ENCODE measurements at regions of chr22 and their contacts with region 1.

Region 1: DNA sequence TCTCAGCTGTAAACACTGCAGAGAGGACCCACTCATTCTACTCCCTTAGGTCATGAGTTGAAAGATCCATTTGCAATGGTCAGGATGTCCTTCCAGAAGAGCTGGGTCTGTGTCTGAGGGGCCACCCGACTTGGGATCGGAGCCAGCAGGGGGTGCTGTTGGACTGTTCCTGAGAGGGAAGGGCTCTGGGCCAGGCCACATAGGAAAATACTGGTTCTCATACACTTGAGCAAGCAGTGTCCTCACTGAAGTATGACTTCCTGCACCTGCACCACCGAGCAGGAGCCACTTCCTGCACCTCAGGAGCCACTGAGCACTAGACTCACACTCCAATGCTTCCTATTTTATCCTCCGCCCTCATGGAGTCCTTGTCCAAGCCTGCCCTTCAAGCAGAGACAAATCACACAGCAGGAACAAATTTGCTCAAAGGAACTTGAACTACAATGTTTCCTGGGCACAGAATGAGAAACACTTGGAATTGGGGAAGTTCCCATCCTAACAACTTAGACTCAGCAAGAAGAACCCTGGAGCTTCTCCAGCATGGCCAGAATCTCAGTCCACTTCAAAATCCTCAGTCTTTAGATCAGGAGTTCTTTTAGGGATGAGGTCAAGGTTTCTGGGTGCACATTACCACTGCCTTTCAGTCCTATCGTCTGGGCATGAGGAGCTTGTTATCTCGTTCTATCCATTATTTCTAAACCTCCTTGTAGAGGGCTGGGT is 36.6 kb upstream of the VPREB1 start:
- DNase-seq: peak; percentile 90
- ATAC-seq: peak; percentile 85
- H3K4me3 ChIP-seq: peak overlapping the region in 1 of 5 experiments; percentile 12
- H3K4me3 Mint-ChIP-seq: peak overlapping the region; percentile 67
- H3K27ac ChIP-seq: peak overlapping the region; percentile 45 to 51
- H3K27ac Mint-ChIP-seq: peak overlapping the region; percentile 93
- H3K4me1 ChIP-seq: peaks cover 53 to 57% of the 10 kb centered on the region in 2 donors
- H3K4me1 Mint-ChIP-seq: peaks cover 54% of the 10 kb centered on the region
- H3K27me3 ChIP-seq: no peaks in the 10 kb centered on the region
- H3K27me3 Mint-ChIP-seq: no peaks in the 10 kb centered on the region
- CTCF ChIP-seq: peak; percentile 89

Region 2: DNA sequence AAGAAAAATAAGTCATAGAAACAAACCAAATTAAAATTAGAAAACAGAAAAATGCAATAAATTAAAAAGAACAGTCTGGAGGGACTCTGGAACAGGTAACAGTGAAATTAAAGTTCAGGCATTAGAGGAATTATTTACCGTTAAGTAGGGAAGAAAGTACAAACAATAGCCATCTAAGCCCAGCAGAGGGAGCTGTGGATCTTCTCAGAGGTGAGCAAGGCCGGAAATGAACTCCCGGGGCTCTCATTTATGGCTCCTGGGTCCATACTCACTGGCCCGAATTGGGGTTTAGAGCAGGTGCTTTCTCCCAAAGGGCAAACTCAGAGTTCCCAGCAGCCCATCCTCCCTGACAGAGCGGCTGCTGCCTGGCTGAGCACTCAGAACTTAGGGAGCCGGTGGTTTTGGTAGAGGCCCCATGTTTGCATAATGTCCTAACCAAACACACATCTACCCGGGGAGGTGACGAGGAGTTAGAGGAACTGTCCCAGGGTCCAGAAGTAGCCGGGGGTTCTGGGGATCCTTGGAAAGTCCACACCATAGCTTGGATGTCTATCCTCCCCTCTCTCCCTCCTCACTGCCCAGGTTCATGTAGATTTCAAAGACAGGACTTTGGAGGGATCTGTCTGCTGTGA is 51.2 kb before region 1 on chr22:
- CTCF ChIA-PET with region 1: interaction called, 80 read pairs
- POLR2A ChIA-PET with region 1: no interaction called
- intact Hi-C with region 1: loop called (anchors 1 kb)
- DNase-seq: peak; percentile 91
- ATAC-seq: peak; percentile 79
- H3K4me3 ChIP-seq: peak overlapping the region in 2 of 5 experiments; percentile 11 to 17
- H3K4me3 Mint-ChIP-seq: peak overlapping the region; percentile 86
- H3K27ac ChIP-seq: peak overlapping the region; percentile 92
- H3K27ac Mint-ChIP-seq: peak overlapping the region; percentile 99
- H3K4me1 ChIP-seq: peaks cover 42 to 53% of the 10 kb centered on the region in 2 donors
- H3K4me1 Mint-ChIP-seq: peaks cover 51% of the 10 kb centered on the region
- H3K27me3 ChIP-seq: no peaks in the 10 kb centered on the region
- H3K27me3 Mint-ChIP-seq: no peaks in the 10 kb centered on the region
- CTCF ChIP-seq: peak; percentile 92

Region 3: GRCh38 chr22:22168190-22168940 is 39.6 kb before region 1 on chr22:
- CTCF ChIA-PET with region 1: interaction called, 80 read pairs
- POLR2A ChIA-PET with region 1: interaction called, 4 read pairs
- intact Hi-C with region 1: no loop called
- DNase-seq: peak; percentile 74
- ATAC-seq: peak; percentile 55
- H3K4me3 ChIP-seq: peak overlapping the region; percentile 20 to 59 (median 40)
- H3K4me3 Mint-ChIP-seq: peak overlapping the region; percentile 92
- H3K27ac ChIP-seq: peak overlapping the region; percentile 96 to 98
- H3K27ac Mint-ChIP-seq: peak overlapping the region; percentile 100
- H3K4me1 ChIP-seq: peaks cover 80 to 88% of the 10 kb centered on the region in 2 donors
- H3K4me1 Mint-ChIP-seq: peaks cover 81% of the 10 kb centered on the region
- H3K27me3 ChIP-seq: no peaks in the 10 kb centered on the region
- H3K27me3 Mint-ChIP-seq: no peaks in the 10 kb centered on the region
- CTCF ChIP-seq: no peak

Region 4: GRCh38 chr22:22235558-22235957 is 27.6 kb after region 1 on chr22:
- CTCF ChIA-PET with region 1: interaction called, 65 read pairs
- POLR2A ChIA-PET with region 1: no interaction called
- intact Hi-C with region 1: loop called (anchors 1 kb)
- DNase-seq: peak; percentile 67
- ATAC-seq: peak; percentile 24
- H3K4me3 ChIP-seq: no peak overlapping the region
- H3K4me3 Mint-ChIP-seq: peak overlapping the region; percentile 37
- H3K27ac ChIP-seq: no peak overlapping the region
- H3K27ac Mint-ChIP-seq: peak overlapping the region; percentile 53
- H3K4me1 ChIP-seq: peaks cover 16 to 27% of the 10 kb centered on the region in 2 donors
- H3K4me1 Mint-ChIP-seq: peaks cover 24% of the 10 kb centered on the region
- H3K27me3 ChIP-seq: no peaks in the 10 kb centered on the region
- H3K27me3 Mint-ChIP-seq: no peaks in the 10 kb centered on the region
- CTCF ChIP-seq: peak; percentile 48

Region 5: DNA sequence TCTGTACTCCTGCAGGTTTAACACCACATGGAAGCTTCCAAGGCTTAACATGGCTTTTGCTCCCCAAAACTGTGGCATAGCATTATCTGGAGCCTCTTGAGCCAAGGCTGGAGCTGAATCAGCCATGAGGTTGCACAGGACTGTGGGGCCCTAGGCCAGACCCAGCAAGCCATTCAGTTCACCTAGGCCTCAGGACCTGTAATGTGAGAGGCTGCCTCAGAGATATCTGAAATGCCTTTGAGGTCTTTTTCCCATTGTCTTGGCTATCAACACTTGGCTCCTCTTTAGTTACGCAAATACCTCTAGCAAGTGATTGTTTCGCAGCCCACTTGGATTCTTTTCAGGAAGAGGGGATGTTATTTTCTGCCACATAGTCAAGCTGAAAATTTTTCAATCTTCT is 108.6 kb after region 1 on chr22:
- CTCF ChIA-PET with region 1: interaction called, 10 read pairs
- POLR2A ChIA-PET with region 1: no interaction called
- intact Hi-C with region 1: no loop called
- DNase-seq: no peak
- ATAC-seq: no peak
- H3K4me3 ChIP-seq: no peak overlapping the region
- H3K4me3 Mint-ChIP-seq: no peak overlapping the region
- H3K27ac ChIP-seq: no peak overlapping the region
- H3K27ac Mint-ChIP-seq: no peak overlapping the region
- H3K4me1 ChIP-seq: peaks cover 15 to 18% of the 10 kb centered on the region in 2 donors
- H3K4me1 Mint-ChIP-seq: peaks cover 22% of the 10 kb centered on the region
- H3K27me3 ChIP-seq: no peaks in the 10 kb centered on the region
- H3K27me3 Mint-ChIP-seq: no peaks in the 10 kb centered on the region
- CTCF ChIP-seq: no peak

Region 6: GRCh38 chr22:22342697-22343580 is 134.9 kb after region 1 on chr22:
- CTCF ChIA-PET with region 1: interaction called, 7 read pairs
- POLR2A ChIA-PET with region 1: no interaction called
- intact Hi-C with region 1: loop called (anchors 2 kb)
- DNase-seq: peak; percentile 75
- ATAC-seq: peak; percentile 53
- H3K4me3 ChIP-seq: no peak overlapping the region
- H3K4me3 Mint-ChIP-seq: peak overlapping the region; percentile 68
- H3K27ac ChIP-seq: peak overlapping the region; percentile 32 to 39
- H3K27ac Mint-ChIP-seq: peak overlapping the region; percentile 78
- H3K4me1 ChIP-seq: peaks cover 22 to 26% of the 10 kb centered on the region in 2 donors
- H3K4me1 Mint-ChIP-seq: peaks cover 27% of the 10 kb centered on the region
- H3K27me3 ChIP-seq: no peaks in the 10 kb centered on the region
- H3K27me3 Mint-ChIP-seq: no peaks in the 10 kb centered on the region
- CTCF ChIP-seq: peak; percentile 96